B cell (primary cell): ENCODE measurements at regions of chr17 and their contacts with region 1.

Region 1: DNA sequence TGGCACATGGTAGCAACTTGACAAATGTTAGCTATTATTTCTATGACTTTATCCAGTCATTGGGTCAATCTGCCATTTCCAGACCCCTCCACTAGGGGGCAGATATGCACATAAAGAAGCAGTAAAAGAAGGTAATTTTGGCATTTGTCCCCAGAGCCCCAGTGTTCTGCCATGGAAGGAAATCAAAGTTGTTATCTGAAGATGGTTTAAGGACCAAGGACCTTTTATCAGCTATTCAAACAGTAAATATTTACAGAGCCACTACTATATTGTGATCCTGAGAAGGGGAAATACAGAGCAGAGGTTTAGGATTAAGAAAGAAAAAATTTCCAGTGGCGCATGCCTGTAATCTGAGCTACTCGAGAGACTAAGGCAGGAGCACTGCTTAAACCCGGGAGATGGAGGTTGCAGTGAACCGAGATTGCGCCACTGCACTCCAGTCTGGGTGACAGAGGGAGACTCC is 20.0 kb downstream of the TRAF4 start:
- DNase-seq: peak; percentile 83
- ATAC-seq: peak; percentile 85
- H3K4me3 ChIP-seq: no peak overlapping the region
- H3K4me3 Mint-ChIP-seq: no peak overlapping the region
- H3K27ac ChIP-seq: no peak overlapping the region
- H3K27ac Mint-ChIP-seq: no peak overlapping the region
- H3K4me1 ChIP-seq: peaks cover 0 to 8% of the 10 kb centered on the region in 2 donors
- H3K4me1 Mint-ChIP-seq: peaks cover 11% of the 10 kb centered on the region
- H3K27me3 ChIP-seq: no peaks in the 10 kb centered on the region
- H3K27me3 Mint-ChIP-seq: no peaks in the 10 kb centered on the region
- CTCF ChIP-seq: peak; percentile 94

Region 2: DNA sequence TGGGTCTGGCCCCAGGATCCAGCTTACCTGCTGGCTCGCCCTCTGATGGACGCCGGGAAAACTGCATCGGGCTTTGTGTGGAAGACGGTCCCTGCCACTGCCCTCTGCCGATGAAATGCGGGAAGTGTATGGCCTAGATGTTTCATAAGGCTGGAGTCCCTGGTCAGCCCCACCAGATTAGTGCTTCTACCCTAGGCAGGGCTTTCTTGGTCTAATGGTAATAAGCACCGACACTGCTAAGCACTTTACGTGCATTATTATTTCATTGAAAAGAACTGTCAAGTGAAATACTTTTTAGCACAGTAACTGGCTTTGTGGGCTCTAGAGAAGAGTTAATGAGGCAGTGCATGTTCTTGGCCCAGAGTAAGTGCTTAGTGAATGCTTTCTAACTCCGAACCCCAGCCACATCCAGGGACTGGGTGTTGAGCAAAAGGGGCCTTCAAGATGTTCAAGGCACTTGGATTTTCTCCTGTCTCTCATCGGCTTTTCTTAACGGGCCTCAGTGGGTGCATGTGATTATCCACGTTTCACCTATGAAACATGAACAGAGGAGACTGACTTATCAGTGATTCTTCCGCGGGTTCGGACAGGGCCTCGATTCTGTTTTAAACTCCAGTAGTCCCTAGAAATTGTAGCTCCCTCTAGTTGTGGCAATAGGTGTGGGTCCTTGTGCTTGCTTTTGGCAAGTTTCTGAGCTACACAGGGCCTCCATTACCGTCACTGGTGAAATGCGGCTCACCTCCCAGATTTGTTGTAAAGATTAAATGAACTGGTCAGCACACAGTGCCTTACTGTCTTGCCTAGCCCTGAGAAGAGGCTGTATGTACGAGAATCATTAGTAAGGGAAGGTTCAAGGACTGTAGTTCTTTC is 13.4 kb before region 1 on chr17:
- CTCF ChIA-PET with region 1: interaction called, 92 read pairs
- POLR2A ChIA-PET with region 1: interaction called, 4 read pairs
- intact Hi-C with region 1: no loop called
- DNase-seq: peak; percentile 93
- ATAC-seq: peak; percentile 97
- H3K4me3 ChIP-seq: no peak overlapping the region
- H3K4me3 Mint-ChIP-seq: no peak overlapping the region
- H3K27ac ChIP-seq: peak overlapping the region in 1 of 2 donors; percentile 41
- H3K27ac Mint-ChIP-seq: peak overlapping the region; percentile 67
- H3K4me1 ChIP-seq: peaks cover 32 to 34% of the 10 kb centered on the region in 2 donors
- H3K4me1 Mint-ChIP-seq: peaks cover 42% of the 10 kb centered on the region
- H3K27me3 ChIP-seq: no peaks in the 10 kb centered on the region
- H3K27me3 Mint-ChIP-seq: no peaks in the 10 kb centered on the region
- CTCF ChIP-seq: peak; percentile 100

Region 3: DNA sequence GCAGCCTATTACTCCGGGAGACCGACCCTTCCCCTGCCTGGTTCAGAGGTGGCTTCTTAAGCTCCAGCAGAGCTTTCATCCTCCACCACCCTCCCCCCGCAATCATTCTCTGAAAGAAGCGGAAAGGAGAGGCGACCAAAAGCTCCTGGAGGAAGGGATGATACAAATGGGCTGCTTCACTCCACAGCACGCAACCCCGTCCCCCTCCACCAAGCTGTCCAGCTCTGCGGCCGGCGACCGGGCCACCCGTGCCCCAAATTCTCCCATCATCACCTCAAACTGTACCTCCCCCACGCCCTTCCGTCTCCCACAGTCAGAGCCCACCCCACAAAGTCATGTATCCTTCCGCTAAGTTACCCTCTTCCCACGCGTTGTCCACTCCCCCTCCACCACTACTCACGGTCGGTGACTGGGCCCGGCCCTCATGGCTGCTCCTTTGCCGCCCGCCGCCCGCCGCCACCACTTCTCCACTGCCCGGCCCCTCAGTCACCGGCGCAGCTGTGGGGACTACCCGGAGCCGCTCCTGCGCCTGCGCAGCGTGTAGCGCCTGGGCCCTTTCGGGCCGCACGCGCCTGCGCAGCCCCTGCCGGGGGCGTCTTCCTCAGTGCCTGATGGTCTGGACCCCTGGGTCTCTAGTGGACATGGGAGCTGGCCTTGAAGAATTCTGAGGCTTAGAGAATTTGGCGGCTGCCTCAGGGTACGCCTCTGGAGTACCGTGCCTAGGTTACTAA is 78.6 kb after region 1 on chr17 and contains the start of gene FAM222B:
- CTCF ChIA-PET with region 1: interaction called, 28 read pairs
- POLR2A ChIA-PET with region 1: no interaction called
- intact Hi-C with region 1: no loop called
- DNase-seq: peak; percentile 91
- ATAC-seq: peak; percentile 98
- H3K4me3 ChIP-seq: peak within 1 kb of the TSS; percentile 67 to 92 (median 87)
- H3K4me3 Mint-ChIP-seq: peak within 1 kb of the TSS; percentile 97
- H3K27ac ChIP-seq: peak within 1 kb of the TSS; percentile 70 to 87
- H3K27ac Mint-ChIP-seq: peak within 1 kb of the TSS; percentile 96
- H3K4me1 ChIP-seq: peaks cover 10 to 15% of the 10 kb centered on the region in 2 donors
- H3K4me1 Mint-ChIP-seq: peaks cover 23% of the 10 kb centered on the region
- H3K27me3 ChIP-seq: no peaks in the 10 kb centered on the region
- H3K27me3 Mint-ChIP-seq: no peaks in the 10 kb centered on the region
- CTCF ChIP-seq: no peak
- total RNA-seq, gene FAM222B: 21.9 and 23.1 TPM in 2 replicates

Region 4: DNA sequence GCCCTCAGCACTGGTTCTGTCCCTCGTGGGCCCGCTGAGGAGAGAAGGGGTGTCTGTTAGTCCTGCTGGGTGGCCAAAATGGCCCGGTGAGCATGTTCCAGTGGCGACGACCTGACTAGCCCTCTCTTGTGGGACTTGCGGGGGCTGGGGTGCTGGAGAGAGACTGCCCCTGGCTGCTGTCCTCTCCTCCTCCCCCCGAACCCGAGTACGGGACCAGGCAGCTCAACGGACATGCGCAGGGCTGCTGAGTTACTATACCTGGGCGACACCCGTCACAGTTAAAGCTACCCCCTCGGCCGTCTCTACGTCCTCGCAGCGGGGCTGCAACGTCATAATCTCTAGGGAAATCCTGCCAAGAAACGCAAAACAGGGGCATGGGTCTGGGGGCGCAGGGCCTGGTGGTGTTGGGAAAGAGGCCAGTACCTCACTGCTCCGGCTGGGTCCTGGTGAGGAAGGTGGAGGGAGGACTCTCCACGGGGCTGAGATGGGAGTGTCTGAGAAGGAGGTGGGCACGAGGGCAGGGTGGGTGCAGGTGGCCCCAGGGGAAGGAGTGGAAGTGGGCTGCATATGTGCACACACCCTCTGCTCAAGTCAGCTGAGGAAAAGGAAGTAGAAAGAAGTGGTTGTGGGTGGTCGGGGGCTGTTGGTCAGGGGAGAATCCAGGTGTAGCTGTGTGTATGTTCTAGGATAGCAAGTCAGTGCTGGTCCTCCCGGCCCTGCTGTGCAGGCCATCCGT is 120.3 kb after region 1 on chr17:
- CTCF ChIA-PET with region 1: interaction called, 15 read pairs
- POLR2A ChIA-PET with region 1: no interaction called
- intact Hi-C with region 1: no loop called
- DNase-seq: no peak
- ATAC-seq: no peak
- H3K4me3 ChIP-seq: no peak overlapping the region
- H3K4me3 Mint-ChIP-seq: no peak overlapping the region
- H3K27ac ChIP-seq: no peak overlapping the region
- H3K27ac Mint-ChIP-seq: no peak overlapping the region
- H3K4me1 ChIP-seq: peaks cover 21 to 28% of the 10 kb centered on the region in 2 donors
- H3K4me1 Mint-ChIP-seq: peaks cover 40% of the 10 kb centered on the region
- H3K27me3 ChIP-seq: no peaks in the 10 kb centered on the region
- H3K27me3 Mint-ChIP-seq: no peaks in the 10 kb centered on the region
- CTCF ChIP-seq: no peak

Region 5: DNA sequence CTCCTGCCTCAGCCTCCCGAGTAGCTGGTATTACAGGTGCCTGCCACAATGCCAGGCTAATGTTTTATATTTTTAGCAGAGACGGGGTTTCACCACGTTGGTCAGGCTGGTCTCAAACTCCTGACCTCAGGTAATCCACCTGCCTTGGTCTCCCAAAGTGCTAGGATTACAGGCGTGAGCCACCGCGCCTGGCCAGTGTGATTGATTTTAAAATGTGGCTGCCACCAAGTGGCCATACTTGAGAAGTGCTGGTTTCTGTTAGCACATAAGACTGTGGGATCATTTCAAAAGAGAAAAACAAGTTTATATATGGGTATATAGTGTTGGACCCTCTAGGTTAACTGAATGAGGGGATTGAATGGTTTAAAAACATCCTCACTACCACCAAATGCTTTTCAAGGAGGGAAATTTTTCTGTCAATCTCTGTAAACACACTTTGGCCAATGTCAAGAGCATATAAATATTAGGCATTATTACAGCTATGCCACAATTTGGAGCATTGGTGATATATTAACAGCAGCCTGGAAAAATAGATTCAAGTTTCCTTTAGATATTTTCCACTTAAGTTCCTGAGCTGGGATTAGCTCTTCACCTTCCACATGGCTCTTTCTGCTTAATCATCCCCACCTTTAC is 152.6 kb after region 1 on chr17:
- CTCF ChIA-PET with region 1: interaction called, 124 read pairs
- POLR2A ChIA-PET with region 1: no interaction called
- intact Hi-C with region 1: loop called (anchors 1 kb)
- DNase-seq: peak; percentile 60
- ATAC-seq: peak; percentile 80
- H3K4me3 ChIP-seq: no peak overlapping the region
- H3K4me3 Mint-ChIP-seq: no peak overlapping the region
- H3K27ac ChIP-seq: no peak overlapping the region
- H3K27ac Mint-ChIP-seq: no peak overlapping the region
- H3K4me1 ChIP-seq: no peaks in the 10 kb centered on the region
- H3K4me1 Mint-ChIP-seq: no peaks in the 10 kb centered on the region
- H3K27me3 ChIP-seq: no peaks in the 10 kb centered on the region
- H3K27me3 Mint-ChIP-seq: no peaks in the 10 kb centered on the region
- CTCF ChIP-seq: peak; percentile 82

Region 6: GRCh38 chr17:28951991-28952975 is 188.4 kb after region 1 on chr17:
- CTCF ChIA-PET with region 1: interaction called, 58 read pairs
- POLR2A ChIA-PET with region 1: interaction called, 4 read pairs
- intact Hi-C with region 1: loop called (anchors 1 kb)
- DNase-seq: peak; percentile 99
- ATAC-seq: peak; percentile 68
- H3K4me3 ChIP-seq: peak overlapping the region; percentile 68 to 99 (median 86)
- H3K4me3 Mint-ChIP-seq: no peak overlapping the region
- H3K27ac ChIP-seq: peak overlapping the region; percentile 97 to 98
- H3K27ac Mint-ChIP-seq: no peak overlapping the region
- H3K4me1 ChIP-seq: peaks cover 24 to 28% of the 10 kb centered on the region in 2 donors
- H3K4me1 Mint-ChIP-seq: peaks cover 17% of the 10 kb centered on the region
- H3K27me3 ChIP-seq: no peaks in the 10 kb centered on the region
- H3K27me3 Mint-ChIP-seq: no peaks in the 10 kb centered on the region
- CTCF ChIP-seq: no peak